ENCODE measurements at regions of chr5 and their contacts with region 1.

Region 1: DNA sequence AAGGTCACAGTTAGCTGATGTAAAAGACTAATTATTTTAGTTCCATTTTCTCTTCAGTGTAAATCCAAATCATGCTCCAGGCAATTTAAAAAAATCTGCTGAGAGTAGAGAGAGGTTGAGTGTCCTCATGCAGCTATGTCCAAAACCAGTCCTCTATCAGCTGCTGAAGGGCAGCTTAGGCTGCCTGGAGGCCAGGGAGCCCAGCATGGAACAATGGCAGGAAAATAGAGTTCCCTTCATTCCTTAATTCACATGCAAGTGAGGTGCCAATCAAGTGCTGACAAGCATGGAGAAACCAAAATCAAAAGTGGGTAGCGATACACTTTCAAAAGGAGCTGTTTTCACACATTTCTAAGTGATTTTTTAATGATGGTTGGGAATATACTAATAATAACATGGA is 78.3 kb upstream of the POU5F2 start:
- DNase-seq: no peak
- H3K4me3 ChIP-seq: no peak overlapping the region
- H3K27ac ChIP-seq: no peak overlapping the region
- H3K4me1 ChIP-seq: no peaks in the 10 kb centered on the region
- H3K27me3 ChIP-seq: no peaks in the 10 kb centered on the region
- CTCF ChIP-seq: no peak
- POLR2A ChIP-seq: no peak

Region 2: DNA sequence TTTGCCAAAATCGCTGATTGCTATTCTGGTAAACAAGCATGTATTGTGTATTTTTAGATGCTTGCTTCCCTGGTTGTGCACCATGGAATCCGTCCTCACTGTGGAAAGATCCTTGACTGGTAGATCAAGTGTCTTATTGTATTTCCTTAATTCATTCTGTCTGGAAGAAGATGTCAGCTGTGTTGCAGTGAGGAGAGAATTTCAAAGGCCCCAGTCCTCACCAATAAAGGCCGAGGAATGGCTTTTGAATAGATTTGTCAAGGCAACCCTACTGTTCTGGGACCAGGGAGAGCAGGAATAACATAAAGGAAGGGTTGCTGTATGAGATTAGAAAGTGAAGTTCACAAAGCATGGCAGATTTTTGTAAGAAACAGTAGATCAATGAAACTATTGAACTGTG is 42.0 kb before region 1 on chr5:
- intact Hi-C with region 1: loop called (anchors 2 kb)
- DNase-seq: no peak
- H3K4me3 ChIP-seq: no peak overlapping the region
- H3K27ac ChIP-seq: no peak overlapping the region
- H3K4me1 ChIP-seq: no peaks in the 10 kb centered on the region
- H3K27me3 ChIP-seq: no peaks in the 10 kb centered on the region
- CTCF ChIP-seq: no peak
- POLR2A ChIP-seq: no peak

Measured in breast epithelium (tissue), 4 donors.